ENCODE measurements at regions of chr11 and their contacts with region 1.

Region 1: DNA sequence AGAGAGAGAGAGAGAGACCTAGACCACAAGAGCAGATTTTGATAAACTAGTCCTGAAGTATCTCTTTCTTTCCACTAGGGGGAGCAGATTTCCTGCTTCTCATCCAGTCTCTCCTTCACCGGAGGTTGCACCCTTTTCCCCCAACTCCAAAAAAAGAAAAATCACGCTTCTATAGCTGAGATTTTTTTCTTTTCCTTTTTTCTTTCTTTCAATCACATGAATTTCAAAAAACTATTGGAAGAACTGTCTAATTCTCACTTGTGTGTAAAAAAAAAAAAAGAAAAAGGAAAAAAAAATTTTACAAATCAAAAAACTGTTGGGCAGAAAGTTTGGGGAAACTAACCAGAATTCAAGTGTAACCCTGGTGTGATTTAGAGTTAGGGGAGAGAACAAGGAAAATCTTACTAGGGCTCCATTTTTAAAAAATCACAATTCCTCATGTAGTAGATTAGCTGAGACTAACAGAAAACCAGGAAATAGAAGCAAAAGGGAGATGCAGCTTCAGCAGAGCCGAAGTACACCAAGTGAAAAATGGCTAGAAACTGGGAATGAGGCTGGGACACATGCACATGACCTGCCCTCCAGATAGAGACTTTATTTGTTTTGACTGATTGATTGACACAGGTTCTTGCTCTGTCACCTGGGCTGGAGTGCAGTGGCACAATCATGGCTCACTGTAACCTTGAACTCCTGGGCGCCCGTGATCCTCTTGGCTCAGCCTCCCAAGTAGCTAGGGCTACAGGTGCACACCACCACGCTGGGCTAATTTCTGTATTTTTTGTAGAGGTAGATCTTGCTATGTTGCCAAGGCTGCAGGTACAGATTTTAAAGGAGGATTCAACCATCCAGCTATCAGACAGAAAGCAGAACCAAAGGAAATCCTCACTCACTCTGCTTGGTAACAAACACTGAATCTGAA is 27.1 kb downstream of the SDHD start:
- DNase-seq: peak; percentile 69
- ATAC-seq: peak; percentile 84
- H3K4me3 ChIP-seq: no peak overlapping the region
- H3K27ac ChIP-seq: no peak overlapping the region
- H3K4me1 ChIP-seq: no peaks in the 10 kb centered on the region
- H3K27me3 ChIP-seq: no peaks in the 10 kb centered on the region
- CTCF ChIP-seq: peak; percentile 69
- POLR2A ChIP-seq: no peak
- RAD21 ChIP-seq: peak; percentile 75

Region 2: GRCh38 chr11:112103446-112103845 is 10.4 kb before region 1 on chr11:
- CTCF ChIA-PET with region 1: interaction called, 26 read pairs
- POLR2A ChIA-PET with region 1: no interaction called
- dilution Hi-C with region 1: no loop called
- in situ Hi-C with region 1: no loop called
- intact Hi-C with region 1: no loop called
- DNase-seq: no peak
- ATAC-seq: no peak
- H3K4me3 ChIP-seq: no peak overlapping the region
- H3K27ac ChIP-seq: no peak overlapping the region
- H3K4me1 ChIP-seq: peaks cover 13% of the 10 kb centered on the region
- H3K27me3 ChIP-seq: no peaks in the 10 kb centered on the region
- CTCF ChIP-seq: no peak
- POLR2A ChIP-seq: no peak
- RAD21 ChIP-seq: no peak

Region 3: DNA sequence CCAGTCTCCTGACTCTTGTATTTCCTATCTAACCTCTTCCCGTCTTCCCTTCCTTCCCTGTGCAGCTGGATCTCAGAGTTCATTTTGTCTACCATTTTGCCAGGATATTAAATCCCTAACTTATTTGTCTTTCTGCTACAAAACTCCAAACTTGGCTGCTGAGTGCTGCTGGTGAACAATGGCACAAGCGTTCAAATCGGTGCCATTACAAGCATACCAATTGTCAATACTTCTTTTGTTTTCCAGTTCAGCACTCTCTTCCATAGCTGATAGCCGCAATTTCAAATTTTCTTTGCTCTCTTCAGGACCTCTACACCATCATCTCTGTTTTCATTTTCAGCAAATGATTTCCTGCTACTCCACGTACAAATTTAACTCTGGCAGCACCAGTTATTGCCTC is 36.7 kb after region 1 on chr11:
- CTCF ChIA-PET with region 1: no interaction called
- POLR2A ChIA-PET with region 1: no interaction called
- dilution Hi-C with region 1: no loop called
- in situ Hi-C with region 1: loop called (anchors 5 kb)
- intact Hi-C with region 1: no loop called
- DNase-seq: no peak
- ATAC-seq: no peak
- H3K4me3 ChIP-seq: no peak overlapping the region
- H3K27ac ChIP-seq: no peak overlapping the region
- H3K4me1 ChIP-seq: no peaks in the 10 kb centered on the region
- H3K27me3 ChIP-seq: no peaks in the 10 kb centered on the region
- CTCF ChIP-seq: no peak
- POLR2A ChIP-seq: no peak
- RAD21 ChIP-seq: no peak

Region 4: DNA sequence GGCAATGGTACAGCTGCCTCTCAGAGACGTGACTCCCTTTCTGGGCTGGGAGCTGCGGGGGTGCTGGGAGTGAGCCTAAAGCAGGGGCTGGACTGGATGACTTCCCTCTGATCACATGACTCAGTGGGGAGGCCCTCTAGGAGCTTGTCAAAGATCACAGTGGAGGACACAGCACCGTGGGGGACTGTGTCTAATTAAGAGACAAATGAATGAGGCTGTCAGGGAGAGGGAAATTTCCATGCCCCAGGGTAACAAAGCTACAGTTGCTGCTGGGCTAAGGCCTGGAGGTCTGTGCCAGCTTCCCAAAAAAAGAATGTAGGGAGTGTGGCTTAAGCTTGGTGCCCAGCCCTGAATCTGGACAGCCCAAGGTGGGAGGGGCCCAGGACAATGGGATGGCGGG is 409.7 kb after region 1 on chr11:
- CTCF ChIA-PET with region 1: no interaction called
- POLR2A ChIA-PET with region 1: no interaction called
- dilution Hi-C with region 1: no loop called
- in situ Hi-C with region 1: no loop called
- intact Hi-C with region 1: no loop called
- DNase-seq: no peak
- ATAC-seq: no peak
- H3K4me3 ChIP-seq: no peak overlapping the region
- H3K27ac ChIP-seq: no peak overlapping the region
- H3K4me1 ChIP-seq: no peaks in the 10 kb centered on the region
- H3K27me3 ChIP-seq: peaks cover 21% of the 10 kb centered on the region
- CTCF ChIP-seq: no peak
- POLR2A ChIP-seq: no peak
- RAD21 ChIP-seq: no peak

Region 5: GRCh38 chr11:113289431-113290187 is 1175.8 kb after region 1 on chr11:
- CTCF ChIA-PET with region 1: no interaction called
- POLR2A ChIA-PET with region 1: no interaction called
- dilution Hi-C with region 1: no loop called
- in situ Hi-C with region 1: loop called (anchors 25 kb)
- intact Hi-C with region 1: loop called (anchors 10 kb)
- DNase-seq: peak; percentile 38
- ATAC-seq: peak; percentile 91
- H3K4me3 ChIP-seq: no peak overlapping the region
- H3K27ac ChIP-seq: no peak overlapping the region
- H3K4me1 ChIP-seq: peaks cover 6% of the 10 kb centered on the region; the same call in 1 of the 2 replicates
- H3K27me3 ChIP-seq: peaks cover 8% of the 10 kb centered on the region; the same call in 1 of the 2 replicates
- CTCF ChIP-seq: peak; percentile 89
- POLR2A ChIP-seq: no peak
- RAD21 ChIP-seq: peak; percentile 92

Measured in IMR-90 (cell line).